HepG2 (cell line): ENCODE measurements at regions of chr5 and their contacts with region 1.

Region 1: GRCh38 chr5:141960449-141961202 is 2.6 kb upstream of the PCDH12 start:
- DNase-seq: peak; percentile 79
- ATAC-seq: peak; percentile 91
- H3K4me3 ChIP-seq: peak overlapping the region in 1 of 3 experiments; percentile 44; a peak in 3 of 6 replicates
- H3K27ac ChIP-seq: no peak overlapping the region
- H3K4me1 ChIP-seq: peaks cover 26% of the 10 kb centered on the region
- H3K27me3 ChIP-seq: peaks cover 0 to 28% of the 10 kb centered on the region in 2 experiments; a peak in 4 of 5 replicates
- CTCF ChIP-seq: peak; percentile 94
- EP300 ChIP-seq: no peak
- POLR2A ChIP-seq: no peak
- RAD21 ChIP-seq: peak; percentile 79

Region 2: DNA sequence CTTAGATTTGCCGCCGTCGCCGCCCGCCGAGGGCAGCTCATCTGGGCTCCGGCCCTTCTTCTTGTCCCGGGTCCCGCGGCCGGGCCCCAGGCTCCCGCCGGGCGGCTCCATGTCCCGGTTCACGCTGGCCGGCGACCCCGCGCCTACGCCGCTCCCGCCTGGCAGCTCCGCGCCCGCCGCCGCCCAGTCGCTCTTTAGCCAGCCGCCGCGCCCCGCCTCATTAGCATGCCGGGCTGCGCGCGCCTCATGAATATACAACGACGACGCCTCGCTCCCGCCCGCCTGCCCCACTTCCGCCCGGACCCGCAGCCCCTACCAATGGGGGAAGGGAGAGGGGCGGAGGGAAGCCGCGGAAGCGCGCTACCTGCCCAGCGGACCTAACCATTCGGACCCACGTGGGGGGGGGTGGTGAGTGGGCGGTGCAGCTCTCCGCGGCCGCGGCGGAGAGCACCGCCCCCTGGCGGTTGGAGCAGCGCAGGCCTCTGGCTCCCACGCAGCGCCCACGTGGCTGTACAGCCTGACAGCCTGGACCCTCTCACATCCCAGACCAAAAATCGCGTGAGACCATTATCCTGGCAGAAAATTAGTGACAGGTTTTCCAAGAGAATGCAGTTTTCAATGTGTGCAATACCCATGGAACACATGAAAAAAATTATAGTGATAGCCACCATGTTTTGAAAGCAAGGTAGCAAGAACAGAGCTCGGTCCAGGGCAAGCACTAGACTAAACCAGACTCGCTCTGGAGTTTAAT is 341.6 kb before region 1 on chr5 and contains the start of gene DIAPH1:
- CTCF ChIA-PET with region 1: no interaction called
- POLR2A ChIA-PET with region 1: no interaction called
- in situ Hi-C with region 1: no loop called
- intact Hi-C with region 1: no loop called
- DNase-seq: peak; percentile 92
- ATAC-seq: peak; percentile 94
- H3K4me3 ChIP-seq: peak within 1 kb of the TSS; percentile 84 to 95 (median 88)
- H3K27ac ChIP-seq: peak within 1 kb of the TSS; percentile 87
- H3K4me1 ChIP-seq: peaks cover 45% of the 10 kb centered on the region
- H3K27me3 ChIP-seq: no peaks in the 10 kb centered on the region
- CTCF ChIP-seq: peak; percentile 98
- EP300 ChIP-seq: peak; percentile 32 to 50; a peak in 2 of 4 replicates
- POLR2A ChIP-seq: peak; percentile 43 to 84
- RAD21 ChIP-seq: peak; percentile 99
- total RNA-seq, gene DIAPH1: 28.5 and 33.9 TPM in 2 replicates

Region 3: DNA sequence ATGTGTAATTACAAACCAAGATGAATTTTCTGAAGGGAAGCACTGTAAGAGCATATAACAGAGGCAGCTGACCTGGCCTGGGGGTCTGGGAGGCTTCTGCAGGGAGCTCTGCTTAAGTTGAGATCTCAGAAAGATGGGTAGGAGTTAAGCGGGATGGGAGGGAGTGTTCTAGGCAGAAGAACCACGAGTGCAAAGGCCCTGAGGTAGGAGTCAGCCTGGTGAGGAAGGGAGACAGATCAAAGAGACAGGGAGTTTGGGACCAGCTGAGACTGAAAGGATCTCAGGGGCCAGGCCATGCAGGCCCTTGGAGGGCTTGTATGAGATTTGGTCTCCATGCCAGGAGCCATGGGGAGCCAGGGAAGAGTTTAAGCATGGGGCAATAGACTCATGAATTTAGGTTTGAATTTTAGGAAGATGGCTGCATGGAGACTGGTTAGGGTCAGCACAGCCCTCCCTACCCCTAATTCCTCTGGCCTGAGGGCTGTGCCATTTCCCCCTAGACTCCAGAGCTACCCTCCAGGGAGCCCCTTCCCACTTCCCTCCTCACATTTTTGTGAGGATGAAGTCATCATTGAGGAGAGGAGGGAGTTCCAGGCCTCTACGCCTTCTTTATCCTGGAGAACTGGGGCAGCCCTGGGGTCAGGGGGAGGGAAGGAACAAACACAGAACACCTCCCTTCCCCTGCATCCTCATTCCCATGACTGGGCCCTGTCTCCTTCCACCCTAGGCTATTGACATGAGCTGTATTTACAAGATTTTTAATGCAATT is 273.8 kb before region 1 on chr5:
- CTCF ChIA-PET with region 1: interaction called, 30 read pairs
- POLR2A ChIA-PET with region 1: interaction called, 3 read pairs
- in situ Hi-C with region 1: loop called (anchors 5 kb)
- intact Hi-C with region 1: loop called (anchors 1 kb)
- DNase-seq: no peak
- ATAC-seq: no peak
- H3K4me3 ChIP-seq: no peak overlapping the region
- H3K27ac ChIP-seq: no peak overlapping the region
- H3K4me1 ChIP-seq: peaks cover 6% of the 10 kb centered on the region
- H3K27me3 ChIP-seq: peaks cover 2 to 26% of the 10 kb centered on the region in 2 experiments
- CTCF ChIP-seq: no peak
- EP300 ChIP-seq: no peak
- POLR2A ChIP-seq: no peak
- RAD21 ChIP-seq: no peak

Region 4: DNA sequence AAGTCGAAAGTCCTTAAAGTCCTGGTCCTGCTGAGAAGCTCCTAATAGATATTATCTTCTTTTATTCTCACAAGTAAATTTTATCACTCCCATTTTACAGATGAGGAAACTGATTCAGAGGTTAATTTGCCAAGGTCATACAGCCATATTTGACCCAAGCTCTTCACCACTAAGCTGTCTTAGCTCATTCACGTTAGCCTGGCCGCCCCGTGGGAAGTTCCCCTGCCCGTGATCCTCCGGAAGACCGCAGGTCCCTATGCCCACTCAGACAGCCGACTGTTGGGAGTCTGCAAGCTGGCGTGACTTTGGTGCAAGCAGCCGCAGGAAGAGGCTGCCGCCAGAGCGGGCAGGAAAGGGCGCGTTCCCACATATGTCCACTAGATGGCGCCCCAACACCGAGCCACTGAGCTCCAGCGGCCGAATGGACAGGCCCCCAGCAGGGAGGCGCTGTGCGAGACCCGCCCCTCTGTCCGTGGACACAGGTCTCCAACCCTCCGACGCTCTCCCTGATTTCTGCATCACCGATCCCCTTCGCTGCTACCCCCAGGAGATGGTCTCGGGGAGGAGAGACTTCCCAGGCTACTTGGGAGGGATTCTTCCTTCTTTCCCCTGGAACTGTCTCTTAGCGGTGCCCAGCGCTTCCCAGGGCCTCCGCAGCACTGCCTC is 268.6 kb before region 1 on chr5:
- CTCF ChIA-PET with region 1: interaction called, 30 read pairs
- POLR2A ChIA-PET with region 1: interaction called, 4 read pairs
- in situ Hi-C with region 1: loop called (anchors 5 kb)
- intact Hi-C with region 1: loop called (anchors 1 kb)
- DNase-seq: peak; percentile 52
- ATAC-seq: peak; percentile 95
- H3K4me3 ChIP-seq: peak overlapping the region in 1 of 3 experiments; percentile 52; a peak in 1 of 6 replicates
- H3K27ac ChIP-seq: no peak overlapping the region
- H3K4me1 ChIP-seq: no peaks in the 10 kb centered on the region
- H3K27me3 ChIP-seq: peaks cover 11 to 48% of the 10 kb centered on the region in 2 experiments
- CTCF ChIP-seq: peak; percentile 99
- EP300 ChIP-seq: no peak
- POLR2A ChIP-seq: no peak
- RAD21 ChIP-seq: peak; percentile 98

Region 5: DNA sequence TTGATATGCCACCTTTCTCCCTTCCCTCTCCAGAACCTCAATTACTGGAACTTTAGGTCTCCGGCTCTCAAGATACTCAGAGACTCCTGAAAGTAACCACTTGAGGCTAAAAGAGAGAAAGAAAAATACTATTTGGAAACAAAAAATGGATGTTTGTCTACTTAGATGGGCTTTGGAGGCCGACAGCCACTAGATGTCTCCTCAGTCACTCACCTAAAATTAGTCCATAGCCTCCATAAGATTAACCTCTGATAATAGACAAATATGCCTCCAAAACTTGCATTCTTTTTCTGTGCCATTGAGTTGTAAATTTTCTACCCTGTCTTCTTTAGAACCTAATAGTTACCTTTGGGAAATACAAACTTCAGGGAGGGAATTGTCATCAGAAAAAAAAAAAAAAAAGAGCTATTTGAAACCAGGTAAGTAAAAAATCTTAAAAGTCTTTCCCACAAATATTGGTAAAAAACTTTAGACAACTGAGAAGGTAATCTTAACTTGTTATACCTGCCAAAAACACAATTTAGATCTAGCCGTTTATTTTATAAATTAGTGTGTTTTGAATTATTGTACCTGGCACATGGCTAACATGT is 71.2 kb before region 1 on chr5:
- CTCF ChIA-PET with region 1: interaction called, 17 read pairs
- POLR2A ChIA-PET with region 1: no interaction called
- in situ Hi-C with region 1: no loop called
- intact Hi-C with region 1: loop called (anchors 1 kb)
- DNase-seq: no peak
- ATAC-seq: 0 out of 3 replicates have a peak, but pooled peaks have one; percentile 44
- H3K4me3 ChIP-seq: no peak overlapping the region
- H3K27ac ChIP-seq: no peak overlapping the region
- H3K4me1 ChIP-seq: no peaks in the 10 kb centered on the region
- H3K27me3 ChIP-seq: no peaks in the 10 kb centered on the region
- CTCF ChIP-seq: peak; percentile 43
- EP300 ChIP-seq: no peak
- POLR2A ChIP-seq: no peak
- RAD21 ChIP-seq: no peak

Region 6: GRCh38 chr5:141914199-141914743 is 46.4 kb before region 1 on chr5:
- CTCF ChIA-PET with region 1: no interaction called
- POLR2A ChIA-PET with region 1: no interaction called
- in situ Hi-C with region 1: no loop called
- intact Hi-C with region 1: loop called (anchors 2 kb)
- DNase-seq: no peak
- ATAC-seq: peak; percentile 91
- H3K4me3 ChIP-seq: peak overlapping the region; percentile 18 to 66 (median 22); a peak in 5 of 6 replicates
- H3K27ac ChIP-seq: no peak overlapping the region
- H3K4me1 ChIP-seq: peaks cover 18% of the 10 kb centered on the region
- H3K27me3 ChIP-seq: peaks cover 0 to 32% of the 10 kb centered on the region in 2 experiments; a peak in 3 of 5 replicates
- CTCF ChIP-seq: peak; percentile 75
- EP300 ChIP-seq: no peak
- POLR2A ChIP-seq: no peak
- RAD21 ChIP-seq: 0 out of 2 replicates have a peak, but pooled peaks have one; percentile 10

Region 7: DNA sequence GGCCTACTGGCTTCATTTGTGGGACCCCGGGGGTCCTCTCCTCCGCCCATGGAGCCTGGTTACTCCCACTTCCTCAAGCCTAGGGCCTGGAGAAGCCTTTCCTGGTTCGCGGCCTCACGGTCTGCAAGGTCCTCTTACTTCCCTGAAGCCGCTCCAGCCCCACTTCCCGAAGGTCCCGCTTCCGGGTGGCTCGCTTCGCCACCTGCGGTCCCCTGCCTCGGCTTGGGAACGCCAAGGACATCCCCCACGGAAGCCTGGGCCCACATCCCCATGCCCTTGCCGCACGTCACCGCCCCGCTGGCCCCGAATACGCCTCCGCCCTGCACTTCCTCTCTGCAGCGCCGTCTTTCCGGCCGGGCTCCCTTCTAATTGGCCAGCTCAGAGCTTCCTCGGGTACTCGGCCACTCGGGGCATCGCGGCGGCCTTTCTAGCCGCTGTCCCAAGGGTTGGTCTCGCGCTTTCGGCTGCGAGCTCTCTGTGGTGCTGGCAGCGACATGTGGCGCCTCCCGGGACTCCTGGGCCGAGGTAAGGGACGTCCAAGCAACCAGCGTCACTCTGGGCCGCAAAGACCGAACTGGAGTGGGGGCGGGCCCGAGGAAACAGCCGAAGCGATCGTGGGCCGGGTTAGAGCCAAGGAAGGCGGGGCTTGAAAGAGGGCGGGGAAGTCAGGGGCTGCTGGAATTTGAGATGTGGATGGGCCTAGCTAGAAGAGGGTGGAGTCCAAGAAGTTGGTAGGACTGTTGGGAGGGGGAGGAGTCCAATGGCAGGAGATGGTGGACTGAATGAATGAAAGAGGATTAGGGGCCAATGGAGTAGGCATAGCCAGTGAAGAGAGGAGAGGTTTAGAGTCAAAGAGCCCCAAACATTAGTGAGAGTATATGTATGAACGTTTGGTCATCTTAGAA is 36.9 kb before region 1 on chr5 and contains the start of gene DELE1:
- CTCF ChIA-PET with region 1: no interaction called
- POLR2A ChIA-PET with region 1: interaction called, 10 read pairs
- in situ Hi-C with region 1: no loop called
- intact Hi-C with region 1: loop called (anchors 5 kb)
- DNase-seq: peak; percentile 90
- ATAC-seq: peak; percentile 98
- H3K4me3 ChIP-seq: peak within 1 kb of the TSS; percentile 76 to 85 (median 80)
- H3K27ac ChIP-seq: peak within 1 kb of the TSS; percentile 96
- H3K4me1 ChIP-seq: peaks cover 42% of the 10 kb centered on the region
- H3K27me3 ChIP-seq: no peaks in the 10 kb centered on the region
- CTCF ChIP-seq: no peak; the same call in 1 of the 2 replicates
- EP300 ChIP-seq: no peak
- POLR2A ChIP-seq: peak; percentile 75 to 90
- RAD21 ChIP-seq: no peak
- total RNA-seq, gene DELE1: 46.5 and 57.5 TPM in 2 replicates

Region 8: DNA sequence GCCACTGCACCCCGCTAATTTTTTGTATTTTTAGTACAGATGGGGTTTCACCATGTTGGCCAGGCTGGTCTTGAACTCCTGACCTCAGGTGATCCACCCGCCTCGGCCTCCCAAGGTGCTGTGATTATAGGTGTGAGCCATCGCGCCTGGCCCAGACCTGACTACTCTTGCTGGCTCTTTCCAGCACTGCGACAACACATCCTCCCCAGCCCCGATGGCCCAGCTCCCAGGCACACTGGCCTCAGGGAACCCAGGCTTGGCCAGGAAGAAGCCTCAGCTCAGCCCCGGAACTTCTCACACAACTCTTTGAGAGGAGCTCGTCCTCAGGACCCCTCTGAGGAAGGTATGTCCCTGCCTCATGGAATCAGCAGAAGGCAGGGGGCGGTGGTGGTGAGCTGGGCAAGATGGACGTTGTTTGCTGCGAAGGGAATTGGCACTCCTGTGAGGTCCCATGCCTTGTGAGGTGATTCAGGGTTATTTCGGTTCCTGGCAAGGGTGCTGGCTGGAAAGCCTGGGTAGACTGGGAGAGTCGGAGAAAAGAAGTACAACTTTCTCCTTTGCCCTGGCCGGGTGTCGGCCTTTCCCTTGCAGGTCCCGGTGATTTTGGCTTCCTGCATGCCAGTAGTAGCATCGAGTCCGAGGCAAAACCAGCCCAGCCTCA is 31.1 kb before region 1 on chr5:
- CTCF ChIA-PET with region 1: no interaction called
- POLR2A ChIA-PET with region 1: no interaction called
- in situ Hi-C with region 1: no loop called
- intact Hi-C with region 1: loop called (anchors 5 kb)
- DNase-seq: no peak
- ATAC-seq: no peak
- H3K4me3 ChIP-seq: no peak overlapping the region
- H3K27ac ChIP-seq: no peak overlapping the region
- H3K4me1 ChIP-seq: peaks cover 9% of the 10 kb centered on the region
- H3K27me3 ChIP-seq: no peaks in the 10 kb centered on the region
- CTCF ChIP-seq: no peak
- EP300 ChIP-seq: no peak
- POLR2A ChIP-seq: no peak
- RAD21 ChIP-seq: no peak